ENCODE measurements at regions of chr11 and their contacts with region 1.

Region 1: GRCh38 chr11:78195917-78196545 is 7.3 kb downstream of the USP35 start:
- DNase-seq: peak in 1 of 5 donors; percentile 40
- ATAC-seq: peak in 1 of 4 donors; percentile 18
- H3K4me3 ChIP-seq: no peak overlapping the region
- H3K27ac ChIP-seq: no peak overlapping the region
- H3K4me1 ChIP-seq: peaks cover 0 to 22% (median 12%) of the 10 kb centered on the region in 12 donors
- H3K27me3 ChIP-seq: no peaks in the 10 kb centered on the region
- CTCF ChIP-seq: no peak
- POLR2A ChIP-seq: no peak

Region 2: GRCh38 chr11:78156105-78156830 is 39.8 kb before region 1 on chr11:
- intact Hi-C with region 1: loop called in 1 of 10 experiments (anchors 5 kb)
- DNase-seq: no peak
- ATAC-seq: no peak
- H3K4me3 ChIP-seq: no peak overlapping the region
- H3K27ac ChIP-seq: no peak overlapping the region
- H3K4me1 ChIP-seq: peaks cover 0 to 7% (median 0%) of the 10 kb centered on the region in 12 donors
- H3K27me3 ChIP-seq: no peaks in the 10 kb centered on the region
- CTCF ChIP-seq: no peak
- POLR2A ChIP-seq: no peak

Region 3: DNA sequence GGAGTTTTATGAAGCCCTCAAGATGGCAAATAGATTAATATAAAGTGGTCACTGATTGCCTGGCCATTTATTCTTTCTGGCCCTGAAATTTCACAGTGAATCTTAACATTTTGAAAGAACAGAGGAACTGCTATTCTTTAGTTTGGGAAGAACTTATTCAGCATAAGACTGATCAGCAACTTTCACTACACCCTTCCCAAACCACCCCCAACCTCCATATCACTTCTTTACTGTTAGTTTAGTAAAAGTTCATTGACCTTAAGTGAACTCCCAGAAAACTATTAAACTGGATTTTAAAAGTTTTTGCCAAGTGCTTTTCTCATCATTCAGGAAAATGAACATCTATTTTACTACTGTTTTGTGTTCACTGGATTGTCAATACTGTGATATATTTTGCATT is 301.3 kb after region 1 on chr11:
- intact Hi-C with region 1: no loop called
- DNase-seq: no peak
- ATAC-seq: no peak
- H3K4me3 ChIP-seq: no peak overlapping the region
- H3K27ac ChIP-seq: peak overlapping the region in 1 of 12 donors; percentile 1
- H3K4me1 ChIP-seq: peaks cover 0 to 17% (median 7%) of the 10 kb centered on the region in 12 donors
- H3K27me3 ChIP-seq: no peaks in the 10 kb centered on the region
- CTCF ChIP-seq: no peak
- POLR2A ChIP-seq: no peak

Measured in heart left ventricle (tissue), 16 donors.